ENCODE measurements at regions of chr4 and their contacts with region 1.

Region 1: GRCh38 chr4:76504613-76505465 is 69.8 kb downstream of the SHROOM3 start:
- DNase-seq: no peak
- H3K4me3 ChIP-seq: no peak overlapping the region
- H3K27ac ChIP-seq: no peak overlapping the region
- H3K4me1 ChIP-seq: no peaks in the 10 kb centered on the region
- H3K27me3 ChIP-seq: no peaks in the 10 kb centered on the region
- CTCF ChIP-seq: peak in 2 of 3 donors; percentile 38 to 47
- EP300 ChIP-seq: no peak
- POLR2A ChIP-seq: no peak

Region 2: DNA sequence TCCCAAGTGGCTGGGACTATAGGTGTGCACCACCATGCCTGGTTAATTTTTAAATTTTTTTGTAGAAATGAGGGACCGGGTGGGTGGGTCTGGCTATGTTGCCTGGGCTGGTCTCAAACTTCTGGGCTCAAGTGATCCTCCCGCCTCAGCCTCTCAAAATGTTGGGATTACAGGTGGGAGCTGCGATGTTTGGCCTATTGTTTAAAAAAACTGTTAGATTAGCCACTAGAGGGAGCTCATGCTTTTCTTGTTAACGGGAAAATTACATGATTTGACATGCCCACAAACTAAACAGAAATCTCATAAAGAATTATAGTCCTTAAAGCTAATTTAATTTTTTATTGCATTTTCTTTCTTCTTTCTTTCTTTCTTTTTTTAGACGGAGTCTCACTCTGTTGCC is 509.1 kb before region 1 on chr4:
- intact Hi-C with region 1: loop called in 1 of 4 experiments (anchors 10 kb)
- DNase-seq: no peak
- H3K4me3 ChIP-seq: no peak overlapping the region
- H3K27ac ChIP-seq: no peak overlapping the region
- H3K4me1 ChIP-seq: peaks cover 2% of the 10 kb centered on the region
- H3K27me3 ChIP-seq: no peaks in the 10 kb centered on the region
- CTCF ChIP-seq: peak in 2 of 3 donors; percentile 27 to 66
- EP300 ChIP-seq: no peak
- POLR2A ChIP-seq: no peak

Region 3: DNA sequence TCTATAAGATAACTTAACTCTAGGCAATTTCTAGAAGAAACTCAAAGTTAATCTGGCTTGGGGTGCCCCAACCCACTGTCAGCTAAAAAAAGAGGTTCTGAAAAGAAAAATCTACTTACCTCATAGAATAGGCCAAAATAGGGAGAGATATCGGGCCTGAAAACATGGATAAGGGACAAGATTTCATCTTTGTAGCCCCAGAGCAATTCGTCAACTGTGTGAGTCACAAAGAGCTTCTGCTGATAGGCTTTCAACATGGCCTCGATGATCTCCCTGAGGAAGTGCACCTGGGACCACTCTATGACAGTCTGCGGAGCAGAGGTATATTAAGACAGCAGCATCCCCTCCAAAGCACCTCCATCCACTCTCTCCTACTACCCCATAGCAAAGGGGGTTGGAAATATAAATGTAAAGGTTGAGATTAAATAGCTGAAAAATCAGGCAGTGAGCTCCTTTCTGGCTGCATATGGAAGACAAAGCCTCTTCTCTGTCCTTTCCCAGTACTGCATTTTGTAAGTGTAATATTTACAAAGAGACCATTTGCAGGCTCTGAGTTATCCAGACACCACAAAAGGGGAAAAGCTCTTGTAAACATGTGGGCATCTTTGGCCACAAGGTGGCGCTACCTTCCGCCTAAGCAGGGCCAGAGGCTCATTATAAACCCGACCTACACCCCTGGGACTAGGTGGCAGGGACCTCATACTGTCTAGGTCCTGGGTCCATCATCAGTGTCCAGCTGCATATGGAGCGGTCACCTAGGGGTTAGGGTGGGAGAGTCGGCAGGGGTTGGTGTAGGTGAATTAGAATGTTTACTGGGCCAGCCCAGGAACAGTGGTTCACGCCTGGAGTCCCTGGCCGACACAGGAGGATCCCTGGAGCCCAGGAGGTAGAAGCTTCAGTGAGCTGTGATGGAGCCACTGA is 325.2 kb before region 1 on chr4:
- intact Hi-C with region 1: loop called in 2 of 4 experiments (anchors 5 to 10 kb)
- DNase-seq: peak; percentile 81 to 90 (median 88)
- H3K4me3 ChIP-seq: no peak overlapping the region
- H3K27ac ChIP-seq: no peak overlapping the region
- H3K4me1 ChIP-seq: peaks cover 9% of the 10 kb centered on the region
- H3K27me3 ChIP-seq: no peaks in the 10 kb centered on the region
- CTCF ChIP-seq: peak; percentile 78 to 91 (median 82)
- EP300 ChIP-seq: no peak
- POLR2A ChIP-seq: peak; percentile 14